HCT116 (cell line): ENCODE measurements at regions of chr9 and their contacts with region 1.

Region 1: DNA sequence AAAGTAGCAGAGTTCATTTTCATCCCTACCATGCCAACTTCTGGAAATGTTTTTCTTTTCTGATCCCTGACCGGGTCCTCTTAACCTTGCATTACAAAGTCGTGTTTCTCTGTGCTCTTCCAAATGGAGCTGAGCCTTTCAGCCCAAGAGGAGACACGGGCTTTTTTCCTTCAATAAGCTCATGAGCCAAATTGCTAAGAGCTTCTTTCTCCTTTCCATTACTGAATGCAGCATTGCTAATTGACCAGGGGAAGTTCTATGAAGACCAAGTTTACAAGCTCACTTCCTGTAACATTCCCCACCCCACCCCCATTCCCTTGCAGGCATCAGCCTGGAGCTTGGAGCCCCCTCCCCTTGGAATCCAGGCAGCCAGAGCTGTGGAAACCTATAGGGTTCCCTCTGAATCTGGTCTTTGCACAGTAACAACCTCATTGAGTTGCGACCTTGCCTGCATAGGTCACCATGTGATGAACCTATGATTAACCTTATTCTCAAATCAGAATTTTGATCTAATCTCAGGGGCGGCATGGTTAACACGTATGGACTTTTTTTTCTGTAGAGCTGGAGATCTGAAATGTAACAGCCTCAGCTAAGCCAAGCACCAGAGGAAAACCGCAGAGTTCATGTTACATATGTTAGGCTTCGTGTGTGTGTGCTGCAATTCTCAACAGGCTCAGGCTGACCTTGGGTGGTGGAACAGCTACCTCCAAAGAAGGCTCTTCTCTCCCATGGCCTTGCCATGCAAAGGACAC is 395.7 kb upstream of the ZNF462 start:
- DNase-seq: no peak
- ATAC-seq: no peak
- H3K4me3 ChIP-seq: no peak overlapping the region
- H3K27ac ChIP-seq: no peak overlapping the region
- H3K4me1 ChIP-seq: no peaks in the 10 kb centered on the region
- H3K27me3 ChIP-seq: no peaks in the 10 kb centered on the region
- CTCF ChIP-seq: no peak
- POLR2A ChIP-seq: no peak
- RAD21 ChIP-seq: no peak

Region 2: GRCh38 chr9:106291786-106292185 is 175.5 kb before region 1 on chr9:
- CTCF ChIA-PET with region 1: no interaction called
- POLR2A ChIA-PET with region 1: no interaction called
- RAD21 ChIA-PET with region 1: no interaction called
- intact Hi-C with region 1: no loop called
- DNase-seq: no peak
- ATAC-seq: no peak
- H3K4me3 ChIP-seq: no peak overlapping the region
- H3K27ac ChIP-seq: no peak overlapping the region
- H3K4me1 ChIP-seq: no peaks in the 10 kb centered on the region
- H3K27me3 ChIP-seq: no peaks in the 10 kb centered on the region
- CTCF ChIP-seq: no peak
- POLR2A ChIP-seq: no peak
- RAD21 ChIP-seq: no peak

Region 3: GRCh38 chr9:106403081-106403480 is 64.2 kb before region 1 on chr9:
- CTCF ChIA-PET with region 1: no interaction called
- POLR2A ChIA-PET with region 1: no interaction called
- RAD21 ChIA-PET with region 1: no interaction called
- intact Hi-C with region 1: loop called (anchors 5 kb)
- DNase-seq: no peak
- ATAC-seq: no peak
- H3K4me3 ChIP-seq: no peak overlapping the region
- H3K27ac ChIP-seq: no peak overlapping the region
- H3K4me1 ChIP-seq: no peaks in the 10 kb centered on the region
- H3K27me3 ChIP-seq: 0 out of 2 replicates have a peak, but pooled peaks cover 4% of the 10 kb centered on the region
- CTCF ChIP-seq: no peak
- POLR2A ChIP-seq: no peak
- RAD21 ChIP-seq: no peak

Region 4: DNA sequence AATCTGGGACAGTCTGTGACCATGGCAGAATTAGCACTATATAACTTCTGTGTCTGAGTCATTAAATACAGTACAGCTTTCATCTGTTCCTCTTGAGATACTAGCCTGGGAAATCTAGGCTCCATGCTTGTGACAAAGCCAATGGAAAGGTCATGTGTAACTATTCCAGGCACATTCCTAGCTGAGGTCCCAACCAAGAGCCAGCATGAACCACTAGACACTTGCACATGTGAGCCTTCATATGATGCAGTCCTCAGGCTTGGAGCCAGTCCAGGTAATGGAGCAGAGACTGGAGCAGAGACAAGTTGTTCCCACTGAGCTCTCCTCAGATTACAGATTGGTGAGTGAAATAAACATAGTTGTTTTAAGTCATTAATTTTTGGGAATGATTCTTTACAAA is 16.7 kb before region 1 on chr9:
- CTCF ChIA-PET with region 1: no interaction called
- POLR2A ChIA-PET with region 1: no interaction called
- RAD21 ChIA-PET with region 1: no interaction called
- intact Hi-C with region 1: loop called (anchors 2 kb)
- DNase-seq: no peak
- ATAC-seq: no peak
- H3K4me3 ChIP-seq: no peak overlapping the region
- H3K27ac ChIP-seq: no peak overlapping the region
- H3K4me1 ChIP-seq: no peaks in the 10 kb centered on the region
- H3K27me3 ChIP-seq: peaks cover 3% of the 10 kb centered on the region; the same call in 1 of the 2 replicates
- CTCF ChIP-seq: no peak
- POLR2A ChIP-seq: no peak
- RAD21 ChIP-seq: no peak

Region 5: DNA sequence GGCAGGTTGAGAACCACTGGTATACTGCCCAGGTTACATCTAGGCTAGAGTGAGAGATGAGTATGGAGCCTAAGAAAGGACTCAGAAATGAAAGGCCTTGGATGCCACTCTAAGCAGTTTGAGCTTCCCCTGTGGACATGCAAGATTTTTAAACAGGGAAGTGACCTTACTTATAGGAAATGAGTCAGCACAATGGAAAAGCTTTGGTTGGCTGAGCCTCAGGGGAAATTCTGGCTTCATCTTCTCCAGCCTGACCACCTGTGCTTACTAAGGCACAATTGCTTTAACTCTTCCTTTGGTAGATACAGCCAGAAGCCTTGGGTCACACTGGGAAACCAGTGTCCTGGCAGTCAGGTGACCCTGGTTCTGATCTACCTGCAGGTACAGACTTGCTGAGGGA is 15.4 kb after region 1 on chr9:
- CTCF ChIA-PET with region 1: no interaction called
- POLR2A ChIA-PET with region 1: no interaction called
- RAD21 ChIA-PET with region 1: no interaction called
- intact Hi-C with region 1: no loop called
- DNase-seq: no peak
- ATAC-seq: no peak
- H3K4me3 ChIP-seq: no peak overlapping the region
- H3K27ac ChIP-seq: no peak overlapping the region
- H3K4me1 ChIP-seq: peaks cover 0 to 5% of the 10 kb centered on the region in 2 experiments; a peak in 1 of 4 replicates
- H3K27me3 ChIP-seq: no peaks in the 10 kb centered on the region
- CTCF ChIP-seq: no peak
- POLR2A ChIP-seq: no peak
- RAD21 ChIP-seq: no peak

Region 6: DNA sequence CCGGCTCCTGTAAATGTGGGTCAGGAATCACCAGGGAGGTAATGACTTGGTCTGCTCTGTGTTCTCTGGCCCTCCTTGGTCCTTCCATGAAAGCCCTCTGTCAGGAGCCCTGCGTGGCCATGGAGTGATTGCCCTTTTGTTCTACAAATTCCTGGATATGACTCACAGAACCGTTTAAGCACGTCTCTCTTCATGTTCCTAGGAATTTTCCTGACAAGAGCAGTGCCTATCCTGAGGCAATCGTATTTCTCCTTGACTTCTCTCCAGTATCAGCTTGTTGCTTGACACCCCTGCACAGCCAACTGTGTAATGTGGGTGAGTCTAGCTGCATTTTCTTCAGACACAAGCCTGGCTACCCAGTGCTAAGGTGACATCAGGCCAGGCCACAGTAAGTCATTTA is 121.3 kb after region 1 on chr9:
- CTCF ChIA-PET with region 1: no interaction called
- POLR2A ChIA-PET with region 1: no interaction called
- RAD21 ChIA-PET with region 1: no interaction called
- intact Hi-C with region 1: no loop called
- DNase-seq: peak; percentile 18
- ATAC-seq: peak; percentile 79
- H3K4me3 ChIP-seq: no peak overlapping the region
- H3K27ac ChIP-seq: no peak overlapping the region
- H3K4me1 ChIP-seq: peaks cover 4 to 11% of the 10 kb centered on the region in 2 experiments
- H3K27me3 ChIP-seq: no peaks in the 10 kb centered on the region
- CTCF ChIP-seq: no peak
- POLR2A ChIP-seq: no peak
- RAD21 ChIP-seq: no peak